MCF 10A (cell line): ENCODE measurements at regions of chr14 and their contacts with region 1.

Region 1: DNA sequence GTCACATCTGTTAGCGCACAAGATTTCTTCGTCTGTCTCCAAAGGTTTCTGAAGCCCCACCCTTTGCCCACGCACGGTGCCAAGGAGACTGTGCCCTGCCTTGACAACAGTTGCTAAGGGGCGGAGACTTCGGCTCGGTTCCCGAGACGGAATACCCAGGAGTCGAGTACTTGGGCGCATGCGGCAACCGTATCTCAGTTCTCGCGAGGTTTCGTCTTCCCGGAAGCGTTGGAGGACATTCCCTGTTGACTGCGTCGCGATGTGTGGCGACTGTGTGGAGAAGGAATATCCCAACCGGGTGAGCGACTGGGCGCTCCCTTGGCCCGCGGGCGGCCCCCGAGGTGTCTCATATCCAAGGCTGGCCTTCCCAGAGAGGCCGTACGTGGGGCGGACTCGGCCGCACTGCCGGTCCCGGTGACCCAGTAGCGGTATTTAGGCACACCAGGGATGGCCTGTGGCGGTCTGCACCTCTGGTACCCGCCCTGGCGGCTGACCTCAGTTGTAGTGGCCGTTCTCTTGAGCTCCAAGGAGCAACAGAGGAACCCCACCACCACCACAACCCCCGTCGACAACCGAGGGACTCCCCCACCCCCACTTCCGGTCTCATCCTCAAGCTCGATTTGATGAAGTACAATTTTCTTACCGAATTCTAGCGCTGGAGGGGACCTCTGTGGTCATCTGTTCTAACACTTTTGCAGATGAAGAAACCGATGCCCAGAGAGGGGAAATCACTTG is at the start of gene CHURC1:
- DNase-seq: peak; percentile 99
- H3K4me3 Mint-ChIP-seq: peak within 1 kb of the TSS; percentile 85
- H3K27ac Mint-ChIP-seq: peak within 1 kb of the TSS; percentile 98
- H3K4me1 Mint-ChIP-seq: peaks cover 25% of the 10 kb centered on the region
- H3K27me3 Mint-ChIP-seq: no peaks in the 10 kb centered on the region
- CTCF ChIP-seq: no peak
- total RNA-seq, gene CHURC1: 72.5 and 89.2 TPM in 2 replicates

Region 2: GRCh38 chr14:64937821-64938193 is 23.4 kb after region 1 on chr14:
- CTCF ChIA-PET with region 1: no interaction called
- POLR2A ChIA-PET with region 1: interaction called, 10 read pairs
- intact Hi-C with region 1: no loop called
- DNase-seq: peak; percentile 16
- H3K4me3 Mint-ChIP-seq: no peak overlapping the region
- H3K27ac Mint-ChIP-seq: no peak overlapping the region
- H3K4me1 Mint-ChIP-seq: no peaks in the 10 kb centered on the region
- H3K27me3 Mint-ChIP-seq: no peaks in the 10 kb centered on the region
- CTCF ChIP-seq: peak; percentile 10